Sciatic nerve (tissue), 2 donors: ENCODE measurements at regions of chr15 and their contacts with region 1.

Region 1: DNA sequence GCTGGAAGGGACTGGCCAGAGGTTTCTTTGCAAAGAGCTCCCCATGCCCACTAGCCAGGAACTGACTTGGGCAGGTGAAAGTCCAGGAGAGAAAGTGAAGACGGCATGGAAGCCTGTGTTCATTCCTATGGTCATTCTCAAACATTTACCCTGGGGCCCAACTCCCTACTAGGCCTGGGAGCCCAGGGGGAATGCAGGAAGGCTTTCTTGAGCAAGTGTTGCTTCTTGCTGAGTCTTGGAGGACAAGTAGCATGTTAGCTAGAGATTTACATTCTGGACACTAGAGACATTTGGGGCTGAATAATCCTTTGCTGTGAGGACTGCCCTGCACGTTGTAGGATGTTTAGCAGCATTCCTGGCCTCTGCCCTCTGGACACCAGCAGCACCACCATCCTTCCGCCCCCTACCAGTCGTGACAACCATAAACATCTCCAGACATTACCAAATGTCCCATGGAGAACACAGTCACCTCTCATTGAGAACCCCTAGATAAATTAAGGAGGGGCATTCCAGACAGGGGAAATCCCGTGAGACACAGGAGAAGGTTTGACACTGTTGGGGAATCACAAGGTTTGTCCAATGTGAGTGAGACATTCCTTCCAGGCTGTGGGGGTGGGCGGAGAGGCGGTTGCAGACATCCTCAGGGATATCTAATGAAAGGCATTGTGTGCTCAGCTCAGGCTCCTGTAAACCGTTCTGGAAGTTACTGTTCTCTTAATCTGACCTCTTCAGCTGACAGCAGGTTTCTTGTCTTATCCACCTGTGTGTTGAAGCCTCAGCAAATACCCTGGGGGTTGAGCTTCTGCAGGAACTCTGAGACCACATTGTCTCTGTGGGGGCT is 236.2 kb downstream of the TLE3 start:
- DNase-seq: no peak
- ATAC-seq: no peak

Region 2: DNA sequence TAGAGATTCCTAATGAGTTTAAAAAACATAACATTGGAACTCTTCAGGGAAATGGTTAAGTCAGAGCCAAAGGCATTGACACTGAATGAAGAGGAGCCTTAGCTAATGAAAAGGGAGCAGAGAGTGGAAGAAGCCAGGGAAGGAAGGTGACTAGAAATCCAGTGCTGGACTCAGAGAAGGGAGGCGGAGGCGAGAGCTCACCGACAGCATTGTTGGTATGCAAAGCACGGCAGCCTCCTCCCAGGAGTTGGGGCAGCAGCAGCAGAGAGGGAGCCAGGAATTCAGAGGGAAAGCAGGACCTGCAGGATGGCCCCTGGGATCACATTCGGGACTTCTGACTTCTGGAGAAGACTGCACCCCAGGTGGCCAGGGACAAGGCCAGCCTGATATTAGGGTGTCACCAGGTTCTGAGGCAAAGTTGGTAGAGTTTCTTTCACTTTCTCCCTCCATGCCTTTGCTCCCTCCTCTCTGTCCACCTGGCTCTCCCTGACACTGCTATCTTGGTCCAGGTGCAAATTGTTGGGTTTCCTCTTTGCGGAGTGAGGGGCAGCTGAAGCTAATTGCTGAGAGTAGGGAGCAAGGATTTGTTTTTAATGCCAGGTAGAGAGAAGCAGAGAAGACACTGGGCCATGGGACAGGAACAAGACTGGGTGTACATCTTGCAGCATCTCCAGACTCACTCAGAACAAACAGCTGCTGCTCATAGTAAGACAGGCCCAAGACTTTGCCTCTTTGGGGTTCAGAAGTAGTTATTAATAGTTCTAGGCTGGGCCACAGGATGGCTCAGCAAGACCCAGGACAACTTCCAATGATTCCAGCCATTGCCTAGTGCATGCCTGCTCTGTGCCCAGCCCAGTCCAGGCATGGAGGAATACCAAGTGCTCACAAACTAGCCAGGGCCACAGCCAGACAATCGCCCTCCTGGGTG is 78.2 kb after region 1 on chr15:
- intact Hi-C with region 1: loop called (anchors 2 kb)
- DNase-seq: no peak
- ATAC-seq: no peak

Region 3: GRCh38 chr15:70339681-70340493 is 478.3 kb after region 1 on chr15:
- intact Hi-C with region 1: no loop called
- DNase-seq: peak; percentile 55
- ATAC-seq: peak; percentile 75